ENCODE measurements at regions of chr11 and their contacts with region 1.

Region 1: DNA sequence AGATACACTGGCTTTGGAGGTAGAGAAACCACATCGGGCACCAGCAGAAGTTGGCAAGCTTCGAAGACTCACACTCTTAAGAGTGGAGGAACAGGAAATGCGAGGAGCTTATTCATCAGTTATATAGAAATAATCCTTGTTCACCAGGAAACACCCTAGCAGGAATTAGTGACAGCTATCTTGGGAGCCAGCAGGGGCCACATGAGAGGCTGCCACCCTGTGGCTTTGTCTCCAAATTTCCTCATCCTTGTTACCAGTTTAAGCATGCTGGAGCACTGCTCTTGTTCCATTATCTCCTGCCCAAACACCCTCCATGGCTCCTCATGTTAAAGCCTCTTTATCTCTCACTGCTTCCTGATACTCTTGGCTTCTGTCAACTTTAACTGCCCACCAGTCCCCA is 131.0 kb downstream of the PLEKHA7 start:
- H3K4me3 Mint-ChIP-seq: no peak overlapping the region
- H3K27ac Mint-ChIP-seq: no peak overlapping the region
- H3K4me1 Mint-ChIP-seq: peaks cover 12% of the 10 kb centered on the region
- H3K27me3 Mint-ChIP-seq: no peaks in the 10 kb centered on the region

Region 2: DNA sequence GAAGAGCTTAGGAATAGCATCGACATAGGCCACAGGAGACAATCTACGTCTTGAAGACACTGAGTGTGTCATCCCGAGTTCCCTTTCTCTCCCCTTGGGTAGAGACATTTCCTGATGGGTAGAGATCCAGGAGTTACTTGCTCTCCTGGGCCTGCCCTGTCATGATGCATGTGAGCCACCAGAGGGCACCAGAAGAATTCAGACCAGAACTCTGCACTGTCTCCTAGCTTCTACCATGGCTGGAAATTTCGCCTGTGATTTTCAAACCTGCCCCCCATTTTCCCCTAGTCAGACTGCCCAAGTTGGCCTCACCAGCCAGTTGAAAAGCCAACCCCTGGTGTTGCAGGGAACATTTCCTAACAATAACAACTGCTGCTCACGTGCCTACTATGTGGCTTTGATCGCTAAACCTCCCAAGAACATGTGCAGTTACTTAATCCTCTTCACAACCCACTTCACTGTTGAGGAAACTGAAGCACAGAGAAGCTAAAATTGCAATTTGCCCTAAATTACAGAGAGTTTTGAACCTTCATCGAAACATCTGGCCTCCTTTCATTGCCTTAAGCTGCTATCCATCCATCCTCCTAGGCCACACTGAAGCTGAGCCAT is 97.5 kb before region 1 on chr11:
- intact Hi-C with region 1: loop called (anchors 1 kb)
- H3K4me3 Mint-ChIP-seq: no peak overlapping the region
- H3K27ac Mint-ChIP-seq: no peak overlapping the region
- H3K4me1 Mint-ChIP-seq: peaks cover 54% of the 10 kb centered on the region
- H3K27me3 Mint-ChIP-seq: no peaks in the 10 kb centered on the region

Region 3: GRCh38 chr11:16820324-16821092 is 62.7 kb before region 1 on chr11:
- intact Hi-C with region 1: loop called (anchors 2 kb)
- H3K4me3 Mint-ChIP-seq: no peak overlapping the region
- H3K27ac Mint-ChIP-seq: no peak overlapping the region
- H3K4me1 Mint-ChIP-seq: peaks cover 49% of the 10 kb centered on the region
- H3K27me3 Mint-ChIP-seq: no peaks in the 10 kb centered on the region